ENCODE measurements at regions of chr1 and their contacts with region 1.

Region 1: GRCh38 chr1:25566730-25567341 is 23.4 kb downstream of the LDLRAP1 start:
- DNase-seq: peak in 4 of 9 donors; percentile 28 to 73 (median 50)
- ATAC-seq: peak; percentile 60
- H3K4me3 ChIP-seq: no peak overlapping the region
- H3K4me3 Mint-ChIP-seq: peak overlapping the region; percentile 74 to 100 (median 98)
- H3K27ac ChIP-seq: peak overlapping the region; percentile 83
- H3K27ac Mint-ChIP-seq: peak overlapping the region; percentile 72 to 98 (median 96)
- H3K4me1 ChIP-seq: peaks cover 39 to 40% of the 10 kb centered on the region in 2 donors
- H3K4me1 Mint-ChIP-seq: peaks cover 40 to 80% (median 68%) of the 10 kb centered on the region in 7 donors
- H3K27me3 ChIP-seq: no peaks in the 10 kb centered on the region
- H3K27me3 Mint-ChIP-seq: no peaks in the 10 kb centered on the region

Region 2: GRCh38 chr1:25247024-25247828 is 319.6 kb before region 1 on chr1 and contains the start of gene RSRP1:
- CTCF ChIA-PET with region 1: no interaction called
- POLR2A ChIA-PET with region 1: interaction called, 5 read pairs
- intact Hi-C with region 1: loop called in 1 of 2 experiments (anchors 5 kb)
- DNase-seq: peak; percentile 99 to 100 (median 99)
- ATAC-seq: peak; percentile 91
- H3K4me3 ChIP-seq: peak within 1 kb of the TSS; percentile 94
- H3K4me3 Mint-ChIP-seq: peak within 1 kb of the TSS; percentile 96 to 99 (median 97)
- H3K27ac ChIP-seq: peak within 1 kb of the TSS; percentile 98
- H3K27ac Mint-ChIP-seq: peak within 1 kb of the TSS; percentile 98 to 100 (median 100)
- H3K4me1 ChIP-seq: peaks cover 30 to 35% of the 10 kb centered on the region in 2 donors
- H3K4me1 Mint-ChIP-seq: peaks cover 28 to 65% (median 51%) of the 10 kb centered on the region in 7 donors
- H3K27me3 ChIP-seq: no peaks in the 10 kb centered on the region
- H3K27me3 Mint-ChIP-seq: peaks cover 0 to 8% (median 0%) of the 10 kb centered on the region in 5 donors
- total RNA-seq, gene RSRP1: 230 to 449 (median 425) TPM

Region 3: DNA sequence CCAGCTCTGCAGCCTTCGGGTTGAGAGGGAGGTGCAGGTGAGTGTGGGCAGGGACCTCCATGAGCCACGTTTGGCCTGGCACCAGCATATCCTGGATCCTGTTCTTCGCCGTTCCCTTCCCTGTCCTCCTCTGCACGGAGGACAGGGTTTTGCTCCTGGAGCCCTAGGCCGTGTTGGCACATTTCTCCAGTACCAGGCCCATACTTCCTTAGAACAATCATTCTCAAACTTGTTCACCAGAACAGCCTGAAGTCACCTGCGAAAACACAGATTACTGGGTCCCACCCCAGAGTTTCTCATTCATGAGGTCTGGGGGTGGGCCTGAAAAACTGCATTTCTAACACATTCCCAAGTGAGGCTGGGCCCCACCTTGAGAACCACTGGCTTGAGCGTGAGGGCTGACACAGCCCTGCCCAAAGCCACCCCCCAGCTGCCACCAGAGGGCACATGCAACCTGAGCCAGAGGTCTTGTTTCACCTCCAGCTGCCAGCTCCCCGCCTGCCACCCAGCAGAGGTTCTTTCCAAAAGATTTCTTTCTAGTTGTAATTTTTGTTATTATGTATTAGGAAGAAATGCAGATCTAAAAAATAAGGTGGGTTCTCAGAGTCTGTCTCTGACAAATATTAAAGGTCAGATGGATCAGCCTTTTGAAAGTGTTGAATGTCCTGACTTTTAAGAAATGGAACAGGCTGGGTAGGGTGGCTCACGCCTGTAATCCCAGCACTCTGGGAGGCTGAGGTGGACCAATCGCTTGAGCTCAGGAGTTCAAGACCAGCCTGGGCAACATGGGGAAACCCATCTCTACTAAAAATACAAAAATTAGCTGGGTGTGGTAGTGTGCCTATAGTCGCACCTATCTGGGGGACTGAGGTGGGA is 63.0 kb before region 1 on chr1:
- CTCF ChIA-PET with region 1: interaction called, 34 read pairs
- POLR2A ChIA-PET with region 1: interaction called, 33 read pairs
- intact Hi-C with region 1: loop called in 1 of 2 experiments (anchors 1 kb)
- DNase-seq: peak; percentile 47 to 82 (median 75)
- ATAC-seq: peak; percentile 95
- H3K4me3 ChIP-seq: no peak overlapping the region
- H3K4me3 Mint-ChIP-seq: peak overlapping the region in 1 of 10 donors; percentile 2
- H3K27ac ChIP-seq: peak overlapping the region; percentile 6
- H3K27ac Mint-ChIP-seq: peak overlapping the region in 8 of 9 donors; percentile 68 to 92 (median 76)
- H3K4me1 ChIP-seq: peaks cover 0 to 20% of the 10 kb centered on the region in 2 donors
- H3K4me1 Mint-ChIP-seq: peaks cover 12 to 39% (median 31%) of the 10 kb centered on the region in 7 donors
- H3K27me3 ChIP-seq: no peaks in the 10 kb centered on the region
- H3K27me3 Mint-ChIP-seq: peaks cover 0 to 6% (median 0%) of the 10 kb centered on the region in 5 donors

Region 4: GRCh38 chr1:25520446-25521061 is 46.3 kb before region 1 on chr1:
- CTCF ChIA-PET with region 1: interaction called, 10 read pairs
- POLR2A ChIA-PET with region 1: interaction called, 11 read pairs
- intact Hi-C with region 1: no loop called
- DNase-seq: peak; percentile 40 to 75 (median 66)
- ATAC-seq: peak; percentile 84
- H3K4me3 ChIP-seq: no peak overlapping the region
- H3K4me3 Mint-ChIP-seq: no peak overlapping the region
- H3K27ac ChIP-seq: no peak overlapping the region
- H3K27ac Mint-ChIP-seq: peak overlapping the region in 7 of 9 donors; percentile 72 to 94 (median 85)
- H3K4me1 ChIP-seq: peaks cover 0 to 5% of the 10 kb centered on the region in 2 donors
- H3K4me1 Mint-ChIP-seq: peaks cover 3 to 18% (median 11%) of the 10 kb centered on the region in 7 donors
- H3K27me3 ChIP-seq: no peaks in the 10 kb centered on the region
- H3K27me3 Mint-ChIP-seq: peaks cover 0 to 4% (median 0%) of the 10 kb centered on the region in 5 donors

Region 5: GRCh38 chr1:25543425-25544242 is 23.2 kb before region 1 on chr1 and contains the start of gene LDLRAP1:
- CTCF ChIA-PET with region 1: interaction called, 36 read pairs
- POLR2A ChIA-PET with region 1: interaction called, 442 read pairs
- intact Hi-C with region 1: no loop called
- DNase-seq: peak in 8 of 9 donors; percentile 28 to 81 (median 52)
- ATAC-seq: peak; percentile 97
- H3K4me3 ChIP-seq: peak within 1 kb of the TSS; percentile 60
- H3K4me3 Mint-ChIP-seq: peak within 1 kb of the TSS; percentile 82 to 98 (median 95)
- H3K27ac ChIP-seq: peak within 1 kb of the TSS; percentile 87
- H3K27ac Mint-ChIP-seq: peak within 1 kb of the TSS; percentile 34 to 97 (median 91)
- H3K4me1 ChIP-seq: peaks cover 35 to 38% of the 10 kb centered on the region in 2 donors
- H3K4me1 Mint-ChIP-seq: peaks cover 26 to 48% (median 39%) of the 10 kb centered on the region in 7 donors
- H3K27me3 ChIP-seq: no peaks in the 10 kb centered on the region
- H3K27me3 Mint-ChIP-seq: peaks cover 0 to 15% (median 0%) of the 10 kb centered on the region in 5 donors
- total RNA-seq, gene LDLRAP1: 28.1 to 364 (median 159) TPM

Region 6: DNA sequence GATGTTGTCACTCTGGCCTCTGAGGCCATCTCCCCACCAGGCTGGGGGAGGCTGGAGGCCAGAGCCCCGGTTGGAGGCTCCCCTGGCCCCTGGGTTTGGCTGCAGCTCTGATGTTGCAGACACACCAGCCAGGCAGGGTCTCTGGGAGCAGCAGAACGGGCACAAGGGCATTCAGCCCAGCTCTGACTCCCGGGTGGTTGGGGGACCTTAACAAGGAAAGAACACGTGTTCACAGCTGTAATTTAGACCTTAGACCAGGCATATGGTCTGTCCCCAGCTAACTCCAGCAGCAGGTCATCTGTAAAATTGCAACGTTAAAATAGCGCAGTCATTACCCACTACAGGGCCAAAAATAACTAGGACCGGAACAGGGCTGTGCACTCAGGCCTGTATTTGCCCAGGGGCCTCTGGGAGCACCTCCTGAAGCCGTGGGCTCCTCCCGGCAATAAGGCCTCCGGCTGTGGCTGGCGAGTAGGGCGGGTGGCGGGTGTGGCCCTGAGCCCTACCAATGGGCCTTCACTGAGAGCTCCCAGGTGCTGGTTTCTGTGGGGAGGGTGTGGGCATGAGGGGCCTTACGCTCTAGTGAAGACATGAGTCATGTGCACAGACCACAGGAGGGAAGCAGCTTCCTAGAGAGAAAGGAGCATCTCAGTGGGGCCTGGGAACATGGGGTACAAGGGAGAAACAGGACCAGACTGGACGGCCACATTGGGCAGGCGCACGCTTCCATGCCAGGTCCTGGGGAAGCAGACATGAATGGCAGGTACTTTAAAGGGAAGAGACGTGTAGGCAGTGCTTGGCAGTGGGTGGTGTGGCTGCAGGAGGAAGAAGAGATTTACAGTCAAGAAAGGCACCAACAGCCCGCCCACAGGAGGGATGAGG is 17.3 kb before region 1 on chr1:
- CTCF ChIA-PET with region 1: interaction called, 36 read pairs
- POLR2A ChIA-PET with region 1: interaction called, 442 read pairs
- intact Hi-C with region 1: loop called in 1 of 2 experiments (anchors 1 kb)
- DNase-seq: peak in 8 of 9 donors; percentile 54 to 81 (median 66)
- ATAC-seq: peak; percentile 96
- H3K4me3 ChIP-seq: peak overlapping the region; percentile 48
- H3K4me3 Mint-ChIP-seq: peak overlapping the region; percentile 74 to 87 (median 85)
- H3K27ac ChIP-seq: peak overlapping the region; percentile 77
- H3K27ac Mint-ChIP-seq: peak overlapping the region; percentile 89 to 98 (median 96)
- H3K4me1 ChIP-seq: peaks cover 77 to 94% of the 10 kb centered on the region in 2 donors
- H3K4me1 Mint-ChIP-seq: peaks cover 62 to 100% (median 92%) of the 10 kb centered on the region in 7 donors
- H3K27me3 ChIP-seq: no peaks in the 10 kb centered on the region
- H3K27me3 Mint-ChIP-seq: peaks cover 0 to 1% (median 0%) of the 10 kb centered on the region in 5 donors